Right ventricle myocardium inferior (tissue), 1 donor: ENCODE measurements at regions of chr13 and their contacts with region 1.

Region 1: GRCh38 chr13:35744566-35745178 is 268.2 kb upstream of the MAB21L1 start:
- DNase-seq: no peak
- ATAC-seq: peak; percentile 84

Region 2: GRCh38 chr13:35771898-35772297 is 27.2 kb after region 1 on chr13:
- intact Hi-C with region 1: loop called (anchors 5 kb)
- DNase-seq: no peak
- ATAC-seq: no peak

Region 3: DNA sequence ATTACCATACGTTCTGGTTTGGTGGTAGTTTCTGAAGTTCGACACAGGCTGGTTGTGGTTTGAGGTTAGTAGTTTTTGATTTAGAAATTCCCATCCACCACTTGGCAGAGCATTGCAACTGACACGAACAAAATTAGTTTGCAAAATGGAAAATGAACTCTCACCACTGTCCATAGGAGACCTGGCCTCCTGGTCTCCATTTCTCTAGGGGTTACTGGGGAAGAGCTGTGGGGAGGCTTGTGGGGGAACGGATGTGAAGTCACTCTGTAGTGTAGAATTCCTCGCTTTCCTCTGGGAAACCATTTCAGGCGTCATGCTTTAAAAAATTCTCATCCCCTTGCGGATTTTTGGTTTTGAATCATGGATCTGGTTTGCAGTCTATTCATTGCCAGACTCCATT is 53.3 kb after region 1 on chr13:
- intact Hi-C with region 1: no loop called
- DNase-seq: no peak
- ATAC-seq: no peak